CD8-positive, alpha-beta T cell (primary cell): ENCODE measurements at regions of chr1 and their contacts with region 1.

Region 1: DNA sequence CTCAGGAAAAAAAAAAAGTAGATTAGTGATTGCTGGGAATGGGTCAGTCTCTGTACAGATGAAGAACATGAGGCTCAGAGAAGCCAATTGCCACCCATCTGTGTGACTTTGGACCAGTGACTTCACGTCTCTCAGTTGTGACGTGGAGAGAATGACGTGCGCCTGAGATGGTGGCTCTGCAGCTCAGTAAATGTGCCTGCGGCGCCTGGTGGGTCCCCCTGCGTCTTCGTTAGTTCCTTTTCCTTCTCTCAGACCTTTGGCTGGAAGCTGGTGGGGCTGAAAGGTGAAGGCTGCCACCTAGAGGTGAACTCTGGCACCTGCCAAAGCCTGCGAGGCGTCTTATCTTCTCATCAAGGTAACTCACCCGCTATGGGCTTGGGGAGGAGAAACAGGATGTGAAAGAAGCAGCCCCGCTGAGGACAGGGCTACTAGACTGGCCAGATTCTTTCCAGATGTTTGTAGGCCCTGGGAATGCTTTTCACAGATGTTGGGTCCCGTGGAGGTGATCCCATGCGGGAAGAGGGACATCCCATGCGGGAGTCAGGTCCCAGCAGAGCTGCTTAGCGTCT is 8.7 kb upstream of the E2F2 start:
- DNase-seq: peak; percentile 82 to 95 (median 92)
- ATAC-seq: peak; percentile 96
- H3K4me3 ChIP-seq: no peak overlapping the region
- H3K4me3 Mint-ChIP-seq: peak overlapping the region; percentile 23
- H3K27ac ChIP-seq: no peak overlapping the region
- H3K27ac Mint-ChIP-seq: peak overlapping the region; percentile 74
- H3K4me1 ChIP-seq: peaks cover 3% of the 10 kb centered on the region
- H3K4me1 Mint-ChIP-seq: peaks cover 15% of the 10 kb centered on the region
- H3K27me3 ChIP-seq: no peaks in the 10 kb centered on the region
- H3K27me3 Mint-ChIP-seq: no peaks in the 10 kb centered on the region
- CTCF ChIP-seq: peak; percentile 74

Region 2: GRCh38 chr1:23216771-23217420 is 322.9 kb before region 1 on chr1:
- CTCF ChIA-PET with region 1: no interaction called
- POLR2A ChIA-PET with region 1: no interaction called
- intact Hi-C with region 1: loop called in 1 of 2 experiments (anchors 2 kb)
- DNase-seq: peak in 8 of 9 experiments; percentile 2 to 57 (median 32)
- ATAC-seq: peak; percentile 61
- H3K4me3 ChIP-seq: peak overlapping the region in 1 of 2 experiments; percentile 19
- H3K4me3 Mint-ChIP-seq: peak overlapping the region; percentile 62
- H3K27ac ChIP-seq: no peak overlapping the region
- H3K27ac Mint-ChIP-seq: no peak overlapping the region
- H3K4me1 ChIP-seq: peaks cover 9% of the 10 kb centered on the region
- H3K4me1 Mint-ChIP-seq: peaks cover 7% of the 10 kb centered on the region
- H3K27me3 ChIP-seq: peaks cover 16% of the 10 kb centered on the region in 2 experiments
- H3K27me3 Mint-ChIP-seq: peaks cover 65% of the 10 kb centered on the region
- CTCF ChIP-seq: peak; percentile 67

Region 3: GRCh38 chr1:23422241-23423030 is 117.3 kb before region 1 on chr1:
- CTCF ChIA-PET with region 1: interaction called, 3 read pairs
- POLR2A ChIA-PET with region 1: interaction called, 5 read pairs
- intact Hi-C with region 1: loop called in 1 of 2 experiments (anchors 5 kb)
- DNase-seq: peak in 8 of 9 experiments; percentile 37 to 80 (median 55)
- ATAC-seq: peak; percentile 77
- H3K4me3 ChIP-seq: peak overlapping the region in 1 of 2 experiments; percentile 21
- H3K4me3 Mint-ChIP-seq: peak overlapping the region; percentile 89
- H3K27ac ChIP-seq: peak overlapping the region in 1 of 2 experiments; percentile 43
- H3K27ac Mint-ChIP-seq: peak overlapping the region; percentile 76
- H3K4me1 ChIP-seq: peaks cover 32% of the 10 kb centered on the region
- H3K4me1 Mint-ChIP-seq: peaks cover 36% of the 10 kb centered on the region
- H3K27me3 ChIP-seq: no peaks in the 10 kb centered on the region
- H3K27me3 Mint-ChIP-seq: peaks cover 3% of the 10 kb centered on the region
- CTCF ChIP-seq: no peak

Region 4: GRCh38 chr1:23514111-23514679 is 25.6 kb before region 1 on chr1:
- CTCF ChIA-PET with region 1: interaction called, 22 read pairs
- POLR2A ChIA-PET with region 1: interaction called, 3 read pairs
- intact Hi-C with region 1: no loop called
- DNase-seq: no peak
- ATAC-seq: no peak
- H3K4me3 ChIP-seq: no peak overlapping the region
- H3K4me3 Mint-ChIP-seq: no peak overlapping the region
- H3K27ac ChIP-seq: no peak overlapping the region
- H3K27ac Mint-ChIP-seq: no peak overlapping the region
- H3K4me1 ChIP-seq: no peaks in the 10 kb centered on the region
- H3K4me1 Mint-ChIP-seq: no peaks in the 10 kb centered on the region
- H3K27me3 ChIP-seq: no peaks in the 10 kb centered on the region
- H3K27me3 Mint-ChIP-seq: no peaks in the 10 kb centered on the region
- CTCF ChIP-seq: no peak

Region 5: DNA sequence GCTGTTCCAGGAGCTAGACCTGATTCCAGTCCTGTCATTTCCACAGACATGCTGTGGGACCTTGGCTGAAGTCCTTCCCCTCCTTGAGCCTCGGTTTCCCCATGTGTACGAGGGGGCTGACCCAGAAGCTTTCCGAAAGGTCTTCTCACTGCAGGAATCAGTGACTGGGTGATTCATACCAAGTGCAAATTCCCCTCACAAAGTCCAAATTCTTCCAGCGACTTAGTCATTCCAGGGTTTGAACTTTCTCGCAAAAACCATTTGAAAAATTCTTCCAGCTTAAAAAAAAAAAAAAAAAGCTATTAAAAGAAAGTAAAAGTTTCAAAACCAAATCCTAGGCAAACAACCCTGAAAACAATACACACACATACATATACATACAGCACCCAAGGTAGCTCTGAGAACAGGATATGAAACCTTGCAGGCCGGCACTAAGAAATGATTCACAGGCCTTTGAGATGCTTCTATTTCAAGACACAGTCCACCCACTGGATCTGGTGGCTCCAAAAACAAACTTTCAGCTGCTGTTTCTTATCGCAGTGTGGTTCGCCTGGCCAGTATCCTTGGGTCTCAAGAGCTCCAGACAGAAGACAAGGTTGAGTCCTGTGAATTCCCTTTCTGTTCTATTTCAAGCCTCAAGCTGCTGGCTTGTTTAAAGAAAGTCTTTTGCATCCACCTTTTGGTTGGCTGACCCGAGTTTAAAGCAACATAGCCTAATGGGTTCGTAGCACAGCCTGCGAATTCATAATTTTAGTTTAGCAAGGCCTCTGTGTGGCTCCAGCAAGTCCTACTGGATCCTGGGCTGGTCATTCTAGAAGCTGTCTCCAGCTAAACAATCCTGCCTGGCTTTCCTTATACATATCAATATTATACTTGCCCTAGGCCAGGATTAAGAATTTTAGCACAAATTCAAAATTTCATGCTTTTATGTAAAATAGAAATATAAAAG is 37.5 kb after region 1 on chr1:
- CTCF ChIA-PET with region 1: interaction called, 13 read pairs
- POLR2A ChIA-PET with region 1: no interaction called
- intact Hi-C with region 1: no loop called
- DNase-seq: no peak
- ATAC-seq: peak; percentile 74
- H3K4me3 ChIP-seq: no peak overlapping the region
- H3K4me3 Mint-ChIP-seq: peak overlapping the region; percentile 50
- H3K27ac ChIP-seq: peak overlapping the region; percentile 7 to 10
- H3K27ac Mint-ChIP-seq: peak overlapping the region; percentile 87
- H3K4me1 ChIP-seq: peaks cover 60% of the 10 kb centered on the region
- H3K4me1 Mint-ChIP-seq: peaks cover 62% of the 10 kb centered on the region
- H3K27me3 ChIP-seq: no peaks in the 10 kb centered on the region
- H3K27me3 Mint-ChIP-seq: no peaks in the 10 kb centered on the region
- CTCF ChIP-seq: no peak

Region 6: GRCh38 chr1:23613191-23614031 is 73.6 kb after region 1 on chr1:
- CTCF ChIA-PET with region 1: interaction called, 13 read pairs
- POLR2A ChIA-PET with region 1: interaction called, 3 read pairs
- intact Hi-C with region 1: no loop called
- DNase-seq: peak in 7 of 9 experiments; percentile 33 to 78 (median 61)
- ATAC-seq: peak; percentile 61
- H3K4me3 ChIP-seq: peak overlapping the region in 1 of 2 experiments; percentile 8
- H3K4me3 Mint-ChIP-seq: peak overlapping the region; percentile 54
- H3K27ac ChIP-seq: peak overlapping the region; percentile 40 to 72
- H3K27ac Mint-ChIP-seq: peak overlapping the region; percentile 90
- H3K4me1 ChIP-seq: peaks cover 65% of the 10 kb centered on the region
- H3K4me1 Mint-ChIP-seq: peaks cover 83% of the 10 kb centered on the region
- H3K27me3 ChIP-seq: no peaks in the 10 kb centered on the region
- H3K27me3 Mint-ChIP-seq: no peaks in the 10 kb centered on the region
- CTCF ChIP-seq: no peak

Region 7: DNA sequence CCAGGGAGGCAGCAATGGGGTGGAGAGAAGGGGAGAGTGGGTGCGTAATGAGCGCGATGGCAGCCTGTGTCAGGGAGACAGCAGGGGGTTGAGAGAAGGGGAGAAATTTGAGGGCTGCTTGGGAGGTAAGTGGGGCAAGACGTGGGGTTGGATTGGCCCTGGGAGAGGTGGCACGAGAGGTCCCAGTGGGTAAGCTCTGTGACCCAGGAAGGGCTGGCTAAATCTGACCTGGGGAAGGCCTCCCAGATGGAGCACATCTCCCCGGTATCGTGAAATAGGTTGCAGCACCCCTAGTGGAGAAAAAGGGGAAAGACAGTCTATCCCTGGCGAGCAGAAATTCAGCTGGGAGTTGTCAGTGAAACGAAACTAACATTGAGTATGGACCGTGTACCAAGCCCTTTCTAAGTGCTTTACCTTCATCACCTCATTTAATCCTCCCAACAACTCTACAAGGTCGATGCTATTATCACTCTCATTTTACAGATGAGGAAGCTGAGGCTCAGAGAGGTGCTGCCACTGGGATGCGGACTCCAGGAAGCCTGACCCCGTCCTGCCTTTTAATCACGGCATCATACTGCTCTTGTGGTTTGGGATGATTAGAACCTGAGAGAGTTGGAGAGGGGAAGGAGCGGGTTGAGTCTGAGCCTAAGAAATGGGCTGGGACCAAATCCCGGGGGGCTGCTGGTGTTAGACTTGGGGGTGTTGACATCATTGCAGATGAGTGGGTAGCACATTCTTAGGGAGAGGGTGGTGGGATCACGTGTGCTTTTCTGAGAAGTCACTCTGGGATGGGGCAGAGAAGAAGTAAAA is 95.3 kb after region 1 on chr1:
- CTCF ChIA-PET with region 1: interaction called, 1,167 read pairs
- POLR2A ChIA-PET with region 1: interaction called, 17 read pairs
- intact Hi-C with region 1: loop called (anchors 1 kb)
- DNase-seq: peak in 7 of 9 experiments; percentile 29 to 83 (median 58)
- ATAC-seq: peak; percentile 92
- H3K4me3 ChIP-seq: peak overlapping the region; percentile 46 to 52
- H3K4me3 Mint-ChIP-seq: peak overlapping the region; percentile 76
- H3K27ac ChIP-seq: peak overlapping the region; percentile 5 to 18
- H3K27ac Mint-ChIP-seq: peak overlapping the region; percentile 92
- H3K4me1 ChIP-seq: peaks cover 25% of the 10 kb centered on the region
- H3K4me1 Mint-ChIP-seq: peaks cover 33% of the 10 kb centered on the region
- H3K27me3 ChIP-seq: no peaks in the 10 kb centered on the region
- H3K27me3 Mint-ChIP-seq: no peaks in the 10 kb centered on the region
- CTCF ChIP-seq: peak; percentile 89